ENCODE measurements at regions of chr10 and their contacts with region 1.

Region 1: GRCh38 chr10:72764151-72764550 is 72.2 kb downstream of the MCU start:
- DNase-seq: peak; percentile 17 to 87
- H3K4me3 ChIP-seq: no peak overlapping the region
- H3K27ac ChIP-seq: peak overlapping the region; percentile 45
- H3K4me1 ChIP-seq: peaks cover 20% of the 10 kb centered on the region
- H3K27me3 ChIP-seq: no peaks in the 10 kb centered on the region
- CTCF ChIP-seq: no peak

Region 2: GRCh38 chr10:72736176-72736827 is 27.8 kb before region 1 on chr10:
- CTCF ChIA-PET with region 1: no interaction called
- POLR2A ChIA-PET with region 1: no interaction called
- intact Hi-C with region 1: no loop called
- DNase-seq: peak in 1 of 2 experiments; percentile 81
- H3K4me3 ChIP-seq: no peak overlapping the region
- H3K27ac ChIP-seq: peak overlapping the region; percentile 40
- H3K4me1 ChIP-seq: peaks cover 56% of the 10 kb centered on the region
- H3K27me3 ChIP-seq: no peaks in the 10 kb centered on the region
- CTCF ChIP-seq: no peak

Region 3: DNA sequence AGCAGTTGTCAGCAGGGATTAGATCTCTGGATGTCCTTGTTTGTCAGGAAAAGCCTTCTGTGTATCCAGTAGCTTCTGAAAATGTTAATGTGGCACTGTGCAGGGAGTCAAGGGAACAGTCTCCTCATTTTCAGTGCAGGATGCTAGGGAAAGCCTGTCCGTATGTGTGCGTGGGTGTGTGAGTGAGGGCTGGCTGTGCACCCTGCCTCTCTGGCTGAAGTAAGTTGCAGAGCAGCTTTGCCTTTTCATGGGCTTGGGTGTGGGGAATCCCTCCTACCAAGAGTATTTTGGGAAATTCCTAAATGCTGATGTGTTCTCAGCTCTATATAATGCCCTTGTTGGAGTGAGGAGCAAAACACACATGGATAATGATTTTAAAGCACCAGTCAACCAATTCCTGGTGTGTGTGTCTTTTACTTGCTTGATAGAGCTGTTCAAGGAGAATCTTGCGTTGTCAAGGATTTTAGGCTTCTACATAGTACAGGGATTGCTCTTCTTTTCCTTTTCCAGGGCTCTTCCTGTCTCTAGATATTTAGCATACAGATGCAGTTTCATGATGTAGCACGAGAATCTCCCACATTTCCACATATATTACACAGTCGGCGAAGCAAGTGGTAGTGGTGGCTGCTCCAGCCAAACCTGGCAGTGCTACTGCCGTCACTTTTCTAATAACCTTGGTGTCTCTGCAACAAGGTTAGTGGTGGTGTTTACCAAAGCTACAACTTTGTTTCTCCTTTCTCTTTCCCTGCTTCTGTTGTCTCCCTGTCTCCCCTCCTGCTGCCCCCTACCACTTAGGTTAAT is 20.6 kb after region 1 on chr10:
- CTCF ChIA-PET with region 1: interaction called, 4 read pairs
- POLR2A ChIA-PET with region 1: interaction called, 7 read pairs
- intact Hi-C with region 1: loop called (anchors 1 kb)
- DNase-seq: peak; percentile 77 to 88
- H3K4me3 ChIP-seq: no peak overlapping the region
- H3K27ac ChIP-seq: peak overlapping the region; percentile 11; the same call in 1 of the 2 replicates
- H3K4me1 ChIP-seq: peaks cover 28% of the 10 kb centered on the region
- H3K27me3 ChIP-seq: no peaks in the 10 kb centered on the region
- CTCF ChIP-seq: no peak

Region 4: DNA sequence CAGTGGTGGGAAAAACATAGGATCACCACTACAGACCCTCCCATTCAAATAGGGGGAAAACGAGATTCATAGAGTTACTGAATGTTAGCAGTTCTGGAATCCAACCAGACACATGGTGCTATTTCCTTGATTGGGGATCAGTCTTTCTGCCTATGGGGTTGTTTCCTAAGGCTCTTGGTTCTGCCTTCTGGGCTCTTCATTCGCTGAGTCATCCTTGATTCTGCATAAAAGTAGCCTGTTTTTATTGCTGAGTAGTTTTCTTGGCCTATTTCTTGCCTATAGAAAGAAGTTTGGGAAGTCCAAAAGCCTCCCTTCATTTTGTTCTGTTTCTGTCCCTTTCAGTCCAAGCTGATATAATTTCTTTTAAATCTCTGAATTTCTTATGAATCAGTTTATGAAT is 30.1 kb after region 1 on chr10:
- CTCF ChIA-PET with region 1: no interaction called
- POLR2A ChIA-PET with region 1: interaction called, 10 read pairs
- intact Hi-C with region 1: no loop called
- DNase-seq: no peak
- H3K4me3 ChIP-seq: no peak overlapping the region
- H3K27ac ChIP-seq: peak overlapping the region; percentile 41; the same call in 1 of the 2 replicates
- H3K4me1 ChIP-seq: peaks cover 33% of the 10 kb centered on the region
- H3K27me3 ChIP-seq: no peaks in the 10 kb centered on the region
- CTCF ChIP-seq: no peak

Measured in PC-9 (cell line).